ENCODE measurements at regions of chrX and their contacts with region 1.

Region 1: DNA sequence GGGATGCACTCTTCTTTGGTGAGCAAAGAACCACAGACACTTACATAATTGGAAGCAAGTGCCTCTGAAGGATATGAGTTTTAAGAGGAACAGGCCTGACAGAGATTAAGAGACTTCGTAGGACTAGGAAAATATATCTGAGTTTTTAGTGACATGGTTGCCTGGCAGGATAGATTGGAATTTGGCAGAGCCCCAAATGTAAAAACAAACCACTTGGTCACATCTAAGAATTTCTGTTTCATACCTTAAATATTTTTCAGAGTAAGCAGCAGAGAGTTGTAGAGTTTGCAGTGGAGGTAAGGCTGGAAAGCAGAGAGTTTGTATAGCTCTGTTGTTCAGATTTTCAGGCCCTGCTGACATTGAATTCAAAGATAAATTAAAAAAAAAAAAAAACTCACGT is 150.1 kb upstream of the MAGEB2 start:
- DNase-seq: peak; percentile 31
- H3K4me3 ChIP-seq: no peak overlapping the region
- H3K27me3 ChIP-seq: no peaks in the 10 kb centered on the region
- CTCF ChIP-seq: no peak

Region 2: DNA sequence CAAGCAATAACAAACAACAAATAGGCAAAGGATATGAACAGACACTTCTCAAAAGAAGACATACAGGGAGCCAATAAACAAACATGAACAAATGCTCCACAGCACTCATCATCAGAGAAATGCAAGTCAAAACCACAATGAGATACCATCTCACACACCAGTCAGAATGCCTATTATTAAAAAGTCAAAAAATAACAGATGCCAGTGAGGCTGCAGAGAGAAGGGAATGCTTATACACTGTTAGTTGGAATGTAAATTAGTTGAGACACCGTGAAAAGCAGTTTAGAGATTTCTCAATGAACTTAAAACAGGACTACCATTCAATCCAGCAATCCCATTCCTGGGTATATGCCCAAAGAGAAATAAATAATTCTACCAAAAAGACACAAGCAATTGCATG is 20.3 kb after region 1 on chrX:
- CTCF ChIA-PET with region 1: no interaction called
- POLR2A ChIA-PET with region 1: interaction called, 13 read pairs
- DNase-seq: no peak
- H3K4me3 ChIP-seq: no peak overlapping the region
- H3K27me3 ChIP-seq: no peaks in the 10 kb centered on the region
- CTCF ChIP-seq: no peak

Measured in BJ (cell line).